ENCODE measurements at regions of chr17 and their contacts with region 1.

Region 1: DNA sequence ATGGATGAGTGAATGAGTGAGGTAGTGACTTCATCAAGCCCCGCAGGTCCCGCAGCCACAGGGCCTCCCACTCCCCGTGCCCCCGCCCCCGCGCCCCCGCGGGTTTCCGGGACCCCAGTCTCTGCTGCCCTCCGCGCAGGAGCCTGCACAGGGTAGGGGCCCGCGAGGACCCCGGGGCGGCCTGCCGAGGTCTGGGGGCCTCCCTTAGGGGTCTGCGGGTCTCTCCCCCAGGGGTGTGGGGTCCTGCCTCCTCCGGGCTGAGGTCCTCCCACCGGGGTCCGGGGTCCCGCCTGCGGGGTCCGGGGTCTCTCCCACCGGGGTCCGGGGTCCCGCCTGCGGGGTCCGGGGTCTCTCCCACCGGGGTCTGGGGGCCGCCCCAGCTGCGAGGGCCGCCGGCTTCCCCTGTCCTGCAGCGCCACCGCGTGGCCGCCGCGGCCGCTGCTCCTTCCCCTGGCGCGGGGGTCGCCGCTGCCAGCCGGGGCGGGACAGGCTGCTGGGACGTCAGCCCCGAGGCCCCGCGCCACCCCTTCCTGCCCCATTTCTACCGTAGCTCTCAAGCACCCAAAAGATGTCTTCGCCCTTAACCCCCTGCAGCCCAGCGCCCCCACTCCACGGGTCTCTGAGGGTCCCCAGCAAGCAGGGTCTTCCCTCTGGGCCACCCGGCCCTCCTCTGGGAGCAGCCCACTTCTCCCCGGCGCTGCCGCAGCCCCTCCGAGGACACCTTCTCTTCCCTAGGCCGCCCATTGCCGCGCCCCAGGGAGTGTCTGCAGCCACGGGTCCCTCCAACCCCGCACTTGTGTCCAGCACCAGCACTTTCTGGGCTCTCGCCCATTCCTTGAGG is 10.4 kb upstream of the CHMP6 start:
- DNase-seq: no peak
- ATAC-seq: peak; percentile 72
- H3K4me3 ChIP-seq: peak overlapping the region; percentile 20 to 31; a peak in 2 of 4 replicates
- H3K27ac ChIP-seq: no peak overlapping the region
- H3K4me1 ChIP-seq: no peaks in the 10 kb centered on the region
- H3K27me3 ChIP-seq: no peaks in the 10 kb centered on the region
- CTCF ChIP-seq: peak; percentile 97

Region 2: GRCh38 chr17:80426681-80427326 is 554.5 kb before region 1 on chr17:
- CTCF ChIA-PET with region 1: no interaction called
- POLR2A ChIA-PET with region 1: no interaction called
- in situ Hi-C with region 1: no loop called
- intact Hi-C with region 1: loop called (anchors 5 kb)
- DNase-seq: peak; percentile 30
- ATAC-seq: peak; percentile 89
- H3K4me3 ChIP-seq: no peak overlapping the region
- H3K27ac ChIP-seq: no peak overlapping the region
- H3K4me1 ChIP-seq: no peaks in the 10 kb centered on the region
- H3K27me3 ChIP-seq: no peaks in the 10 kb centered on the region
- CTCF ChIP-seq: peak; percentile 99

Region 3: GRCh38 chr17:80959330-80960036 is 21.8 kb before region 1 on chr17:
- CTCF ChIA-PET with region 1: no interaction called
- POLR2A ChIA-PET with region 1: interaction called, 15 read pairs
- in situ Hi-C with region 1: no loop called
- intact Hi-C with region 1: no loop called
- DNase-seq: no peak
- ATAC-seq: peak; percentile 46
- H3K4me3 ChIP-seq: no peak overlapping the region
- H3K27ac ChIP-seq: no peak overlapping the region
- H3K4me1 ChIP-seq: no peaks in the 10 kb centered on the region
- H3K27me3 ChIP-seq: no peaks in the 10 kb centered on the region
- CTCF ChIP-seq: no peak

Region 4: DNA sequence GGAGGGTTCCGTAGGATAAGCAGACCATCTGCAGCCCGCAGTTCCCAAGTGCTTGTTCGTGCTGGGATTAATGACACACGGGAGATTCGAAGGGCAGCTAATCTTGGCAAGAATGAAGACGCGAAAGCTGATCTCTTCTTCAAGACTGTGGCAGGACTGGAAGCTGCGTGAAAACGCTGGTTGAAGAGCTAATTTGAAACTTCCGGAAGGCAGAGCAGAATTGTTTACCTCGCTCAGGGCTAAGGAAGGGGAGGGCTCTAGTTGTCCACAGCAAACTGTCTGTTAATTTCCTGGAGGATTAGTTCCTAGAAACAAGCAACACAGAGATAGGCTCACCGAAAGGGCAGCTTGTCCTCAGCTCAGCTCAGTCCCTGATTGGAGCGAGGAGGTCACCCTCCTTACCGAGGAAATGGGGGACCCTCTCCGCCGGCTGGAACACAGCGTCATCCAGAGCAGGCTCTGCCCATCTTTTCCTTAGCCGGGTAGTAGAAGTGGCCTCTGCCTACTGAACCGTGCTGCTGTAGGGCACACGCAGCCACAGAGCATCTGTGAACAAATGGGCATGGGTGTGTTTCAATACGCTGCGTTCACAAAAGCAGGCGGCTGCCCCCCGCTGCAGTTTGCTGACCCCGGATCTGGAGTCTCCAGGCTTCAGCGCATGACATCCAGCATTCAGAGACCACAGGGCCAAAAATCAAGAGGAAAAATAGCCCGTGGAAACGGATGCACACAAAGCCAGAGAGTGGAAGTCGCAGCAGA is 36.9 kb after region 1 on chr17:
- CTCF ChIA-PET with region 1: no interaction called
- POLR2A ChIA-PET with region 1: no interaction called
- in situ Hi-C with region 1: no loop called
- intact Hi-C with region 1: no loop called
- DNase-seq: no peak
- ATAC-seq: peak; percentile 78
- H3K4me3 ChIP-seq: peak overlapping the region; percentile 26 to 49
- H3K27ac ChIP-seq: peak overlapping the region; percentile 80
- H3K4me1 ChIP-seq: peaks cover 28% of the 10 kb centered on the region
- H3K27me3 ChIP-seq: no peaks in the 10 kb centered on the region
- CTCF ChIP-seq: no peak

Region 5: DNA sequence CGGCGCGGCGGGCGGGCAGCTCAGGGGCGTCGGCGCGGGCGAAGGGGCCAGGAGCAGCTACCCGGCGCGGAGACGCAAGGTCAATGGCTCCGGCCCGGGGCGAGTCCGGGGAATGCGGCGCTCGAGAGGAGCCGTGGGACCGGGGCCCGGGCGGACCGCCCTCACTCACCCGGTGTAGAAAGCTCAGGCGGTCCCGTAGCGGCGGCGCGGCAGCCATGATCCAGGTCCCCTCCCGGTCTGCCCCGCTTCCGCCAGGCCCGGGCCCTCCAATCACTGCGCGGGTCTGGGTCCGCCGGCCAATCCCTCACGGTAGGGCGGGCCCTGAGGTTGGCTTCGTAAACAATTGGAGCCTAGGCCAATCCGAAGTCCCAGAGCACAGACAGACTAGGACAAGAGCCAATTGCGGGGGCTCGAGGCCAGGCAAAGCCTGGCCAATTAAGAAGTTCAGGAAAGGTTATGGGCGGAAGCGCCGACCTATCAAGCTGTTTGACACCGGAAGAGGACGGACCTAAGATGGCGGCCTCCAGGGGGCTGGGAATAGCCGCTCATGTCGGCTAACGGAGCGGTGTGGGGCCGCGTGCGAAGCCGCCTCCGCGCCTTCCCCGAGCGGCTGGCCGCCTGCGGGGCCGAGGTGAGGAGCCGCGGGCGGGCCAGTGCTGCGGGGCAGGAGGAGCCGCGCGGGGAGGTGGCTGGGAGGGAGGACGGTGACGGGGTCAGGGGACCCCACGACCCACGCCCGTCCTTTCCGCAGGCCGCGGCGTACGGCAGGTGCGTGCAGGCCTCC is 257.7 kb after region 1 on chr17 and contains the starts of genes NDUFAF8 and TEPSIN:
- CTCF ChIA-PET with region 1: no interaction called
- POLR2A ChIA-PET with region 1: interaction called, 11 read pairs
- in situ Hi-C with region 1: no loop called
- intact Hi-C with region 1: no loop called
- DNase-seq: peak; percentile 96
- ATAC-seq: peak; percentile 94
- H3K4me3 ChIP-seq: peak within 1 kb of the TSS; percentile 76 to 99
- H3K27ac ChIP-seq: peak within 1 kb of the TSS; percentile 93
- H3K4me1 ChIP-seq: peaks cover 40% of the 10 kb centered on the region
- H3K27me3 ChIP-seq: no peaks in the 10 kb centered on the region
- CTCF ChIP-seq: no peak
- total RNA-seq, gene NDUFAF8: 75.8 TPM
- total RNA-seq, gene TEPSIN: 44.9 TPM